GM12878 (cell line): ENCODE measurements at regions of chr2 and their contacts with region 1.

Region 1: GRCh38 chr2:179031731-179032408 is 18.1 kb downstream of the CCDC141 start:
- DNase-seq: peak; percentile 88
- ATAC-seq: peak; percentile 94
- H3K4me3 ChIP-seq: peak overlapping the region; percentile 46
- H3K27ac ChIP-seq: peak overlapping the region; percentile 95
- H3K4me1 ChIP-seq: peaks cover 15% of the 10 kb centered on the region
- H3K27me3 ChIP-seq: no peaks in the 10 kb centered on the region
- CTCF ChIP-seq: no peak
- EP300 ChIP-seq: peak; percentile 51 to 65; a peak in 2 of 4 replicates
- POLR2A ChIP-seq: no peak
- RAD21 ChIP-seq: 0 out of 2 replicates have a peak, but pooled peaks have one; percentile 9

Region 2: GRCh38 chr2:179044500-179044899 is 12.6 kb after region 1 on chr2:
- CTCF ChIA-PET with region 1: interaction called, 22 read pairs
- POLR2A ChIA-PET with region 1: interaction called, 20 read pairs
- RAD21 ChIA-PET with region 1: interaction called, 14 read pairs
- SMC1A ChIA-PET with region 1: interaction called, 89 read pairs
- in situ Hi-C with region 1: no loop called
- intact Hi-C with region 1: no loop called
- DNase-seq: no peak
- ATAC-seq: peak; percentile 8
- H3K4me3 ChIP-seq: peak overlapping the region; percentile 25; the same call in 1 of the 2 replicates
- H3K27ac ChIP-seq: 0 out of 2 replicates have a peak overlapping the region, but pooled peaks have one; percentile 31
- H3K4me1 ChIP-seq: peaks cover 29% of the 10 kb centered on the region
- H3K27me3 ChIP-seq: no peaks in the 10 kb centered on the region
- CTCF ChIP-seq: no peak
- EP300 ChIP-seq: no peak
- POLR2A ChIP-seq: no peak
- RAD21 ChIP-seq: no peak

Region 3: DNA sequence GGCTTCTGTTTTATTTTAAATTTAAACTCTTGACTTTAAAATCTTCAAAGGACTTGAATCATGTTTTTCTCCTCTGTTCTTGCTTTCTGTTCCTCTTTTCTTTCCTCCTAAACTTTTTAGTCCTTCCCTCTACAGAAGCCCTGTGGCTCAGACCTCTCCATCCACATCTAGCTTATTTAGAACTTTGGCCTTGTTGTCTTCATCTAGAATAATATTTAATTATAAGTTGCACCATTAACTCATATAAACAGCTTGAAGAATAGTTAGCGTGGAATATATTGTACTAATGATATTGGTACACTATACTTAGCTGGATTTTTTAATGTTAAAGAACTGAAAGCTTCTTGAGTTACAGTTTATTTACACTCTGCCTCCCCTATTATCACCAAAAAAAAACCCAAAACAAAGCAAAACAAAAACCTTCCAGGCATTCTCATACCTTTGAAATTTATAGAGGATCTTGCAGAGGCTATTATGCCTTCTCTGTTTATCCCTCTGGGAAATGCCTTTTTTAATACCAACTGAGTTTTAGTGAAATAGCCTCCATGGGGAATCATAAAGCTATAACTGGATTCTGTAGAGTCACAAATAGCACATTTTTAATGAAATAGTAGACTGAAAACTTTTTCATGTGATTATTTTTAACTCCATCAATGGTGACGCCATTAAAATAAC is 27.3 kb after region 1 on chr2:
- CTCF ChIA-PET with region 1: interaction called, 4 read pairs
- POLR2A ChIA-PET with region 1: interaction called, 3 read pairs
- RAD21 ChIA-PET with region 1: interaction called, 5 read pairs
- SMC1A ChIA-PET with region 1: interaction called, 89 read pairs
- in situ Hi-C with region 1: no loop called
- intact Hi-C with region 1: no loop called
- DNase-seq: no peak
- ATAC-seq: peak; percentile 94
- H3K4me3 ChIP-seq: no peak overlapping the region
- H3K27ac ChIP-seq: peak overlapping the region; percentile 4; the same call in 1 of the 2 replicates
- H3K4me1 ChIP-seq: peaks cover 9% of the 10 kb centered on the region
- H3K27me3 ChIP-seq: no peaks in the 10 kb centered on the region
- CTCF ChIP-seq: no peak
- EP300 ChIP-seq: no peak
- POLR2A ChIP-seq: no peak
- RAD21 ChIP-seq: no peak

Region 4: GRCh38 chr2:179106676-179107428 is 75.0 kb after region 1 on chr2:
- CTCF ChIA-PET with region 1: interaction called, 5 read pairs
- POLR2A ChIA-PET with region 1: interaction called, 7 read pairs
- RAD21 ChIA-PET with region 1: interaction called, 36 read pairs
- SMC1A ChIA-PET with region 1: interaction called, 21 read pairs
- in situ Hi-C with region 1: no loop called
- intact Hi-C with region 1: loop called (anchors 1 kb)
- DNase-seq: peak; percentile 56
- ATAC-seq: peak; percentile 87
- H3K4me3 ChIP-seq: no peak overlapping the region
- H3K27ac ChIP-seq: no peak overlapping the region
- H3K4me1 ChIP-seq: peaks cover 14% of the 10 kb centered on the region; the same call in 1 of the 2 replicates
- H3K27me3 ChIP-seq: no peaks in the 10 kb centered on the region
- CTCF ChIP-seq: no peak
- EP300 ChIP-seq: 0 out of 4 replicates have a peak, but pooled peaks of 1 of the 2 experiments have one; percentile 44
- POLR2A ChIP-seq: no peak
- RAD21 ChIP-seq: no peak

Region 5: DNA sequence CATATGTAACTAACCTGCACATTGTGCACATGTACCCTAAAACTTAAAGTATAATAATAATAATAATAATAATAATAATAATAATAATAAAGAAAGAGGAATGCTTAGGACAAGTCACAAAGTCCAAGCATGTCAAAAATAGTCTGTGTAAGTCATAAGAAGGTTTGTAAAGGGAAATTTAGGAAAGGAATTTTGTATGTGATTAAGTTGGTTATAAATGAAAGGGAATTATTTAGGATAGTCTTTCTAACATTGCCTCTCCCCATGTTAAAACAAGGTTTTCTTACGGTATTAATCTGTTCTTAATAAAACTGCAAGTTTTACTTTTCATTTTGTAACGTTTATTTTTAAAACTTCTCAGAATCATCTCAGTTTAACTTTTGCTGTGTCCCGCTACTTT is 170.0 kb after region 1 on chr2:
- CTCF ChIA-PET with region 1: no interaction called
- POLR2A ChIA-PET with region 1: no interaction called
- RAD21 ChIA-PET with region 1: no interaction called
- SMC1A ChIA-PET with region 1: no interaction called
- in situ Hi-C with region 1: no loop called
- intact Hi-C with region 1: no loop called
- DNase-seq: no peak
- ATAC-seq: no peak
- H3K4me3 ChIP-seq: no peak overlapping the region
- H3K27ac ChIP-seq: no peak overlapping the region
- H3K4me1 ChIP-seq: no peaks in the 10 kb centered on the region
- H3K27me3 ChIP-seq: no peaks in the 10 kb centered on the region
- CTCF ChIP-seq: no peak
- EP300 ChIP-seq: no peak
- POLR2A ChIP-seq: no peak
- RAD21 ChIP-seq: no peak

Region 6: GRCh38 chr2:179805001-179805400 is 773.1 kb after region 1 on chr2:
- CTCF ChIA-PET with region 1: no interaction called
- POLR2A ChIA-PET with region 1: no interaction called
- RAD21 ChIA-PET with region 1: no interaction called
- SMC1A ChIA-PET with region 1: no interaction called
- in situ Hi-C with region 1: no loop called
- intact Hi-C with region 1: no loop called
- DNase-seq: no peak
- ATAC-seq: no peak
- H3K4me3 ChIP-seq: no peak overlapping the region
- H3K27ac ChIP-seq: no peak overlapping the region
- H3K4me1 ChIP-seq: no peaks in the 10 kb centered on the region
- H3K27me3 ChIP-seq: no peaks in the 10 kb centered on the region
- CTCF ChIP-seq: no peak
- EP300 ChIP-seq: no peak
- POLR2A ChIP-seq: no peak
- RAD21 ChIP-seq: no peak